Left ventricle myocardium inferior (tissue), 1 donor: ENCODE measurements at regions of chr11 and their contacts with region 1.

Region 1: GRCh38 chr11:34174412-34175041 is 69.1 kb downstream of the NAT10 start:
- DNase-seq: peak; percentile 84
- H3K4me3 ChIP-seq: peak overlapping the region; percentile 50
- H3K27ac ChIP-seq: peak overlapping the region; percentile 10
- H3K4me1 ChIP-seq: peaks cover 13% of the 10 kb centered on the region
- H3K27me3 ChIP-seq: peaks cover 8% of the 10 kb centered on the region
- CTCF ChIP-seq: peak; percentile 94

Region 2: GRCh38 chr11:34357701-34358257 is 183.3 kb after region 1 on chr11 and contains the start of gene ABTB2:
- intact Hi-C with region 1: loop called (anchors 2 kb)
- DNase-seq: peak; percentile 98
- H3K4me3 ChIP-seq: peak within 1 kb of the TSS; percentile 83
- H3K27ac ChIP-seq: peak within 1 kb of the TSS; percentile 90
- H3K4me1 ChIP-seq: peaks cover 43% of the 10 kb centered on the region
- H3K27me3 ChIP-seq: peaks cover 56% of the 10 kb centered on the region
- CTCF ChIP-seq: peak; percentile 9
- total RNA-seq, gene ABTB2: 24.7 TPM